HepG2 (cell line): ENCODE measurements at regions of chr13 and their contacts with region 1.

Region 1: GRCh38 chr13:98484289-98485219 is 92.4 kb downstream of the STK24 start:
- DNase-seq: peak; percentile 91
- ATAC-seq: peak; percentile 93
- H3K4me3 ChIP-seq: peak overlapping the region; percentile 23 to 66 (median 34); a peak in 5 of 6 replicates
- H3K27ac ChIP-seq: peak overlapping the region; percentile 88
- H3K4me1 ChIP-seq: peaks cover 92% of the 10 kb centered on the region
- H3K27me3 ChIP-seq: no peaks in the 10 kb centered on the region
- CTCF ChIP-seq: no peak
- EP300 ChIP-seq: peak in 1 of 2 experiments; percentile 24; a peak in 1 of 4 replicates
- POLR2A ChIP-seq: no peak
- RAD21 ChIP-seq: no peak

Region 2: GRCh38 chr13:98570929-98571372 is 86.4 kb after region 1 on chr13:
- CTCF ChIA-PET with region 1: interaction called, 3 read pairs
- POLR2A ChIA-PET with region 1: interaction called, 15 read pairs
- in situ Hi-C with region 1: no loop called
- intact Hi-C with region 1: loop called (anchors 2 kb)
- DNase-seq: peak; percentile 77
- ATAC-seq: peak; percentile 75
- H3K4me3 ChIP-seq: peak overlapping the region; percentile 11 to 59 (median 39)
- H3K27ac ChIP-seq: peak overlapping the region; percentile 74
- H3K4me1 ChIP-seq: peaks cover 90% of the 10 kb centered on the region
- H3K27me3 ChIP-seq: no peaks in the 10 kb centered on the region; a peak in 1 of 5 replicates
- CTCF ChIP-seq: no peak
- EP300 ChIP-seq: no peak
- POLR2A ChIP-seq: peak in 1 of 2 experiments; percentile 30; a peak in 1 of 4 replicates
- RAD21 ChIP-seq: no peak

Region 3: DNA sequence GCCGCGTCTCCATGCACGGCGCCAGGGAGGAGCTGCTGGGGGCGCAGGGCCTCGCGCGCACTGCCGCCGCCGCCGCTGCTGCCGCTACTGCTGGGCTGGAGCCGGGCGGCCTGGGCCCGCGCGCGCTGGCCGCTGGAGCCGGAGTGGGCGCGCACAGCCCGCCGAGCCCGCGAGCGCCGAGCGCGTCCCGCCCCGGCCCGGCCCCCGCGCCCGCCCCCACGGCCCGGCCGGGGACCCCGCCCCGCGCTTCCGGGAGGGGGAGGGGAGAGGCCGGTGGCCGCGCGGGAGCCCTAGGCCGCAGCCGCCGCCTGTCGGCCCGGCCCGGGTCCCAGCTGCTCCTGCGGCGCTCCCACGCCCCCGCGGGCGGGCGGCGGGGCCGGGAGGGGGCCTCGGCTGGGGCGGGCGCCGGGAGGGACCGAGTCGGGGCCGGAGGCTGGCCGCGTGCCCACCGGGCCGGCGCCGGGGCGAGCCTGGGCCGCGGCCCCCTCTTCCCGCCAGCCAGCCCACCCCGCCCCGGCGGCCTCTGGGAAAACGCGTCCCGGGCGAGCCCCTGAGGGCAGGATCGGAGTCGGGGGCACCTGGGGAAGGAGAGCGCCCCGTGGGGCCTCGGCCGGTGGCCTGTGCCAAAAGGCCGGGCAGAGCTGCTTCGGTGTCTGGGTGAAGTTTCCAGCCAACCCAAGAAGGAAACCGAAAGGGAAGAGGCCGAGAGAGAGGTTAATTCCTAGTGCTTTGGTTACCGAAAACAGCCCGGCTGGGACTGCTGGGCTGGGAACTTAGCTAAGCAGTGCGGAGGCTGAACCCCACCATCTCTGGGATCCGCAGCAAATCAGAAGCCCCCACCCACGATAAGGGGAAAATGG is 92.6 kb after region 1 on chr13 and contains the start of gene STK24:
- CTCF ChIA-PET with region 1: interaction called, 3 read pairs
- POLR2A ChIA-PET with region 1: interaction called, 15 read pairs
- in situ Hi-C with region 1: no loop called
- intact Hi-C with region 1: no loop called
- DNase-seq: peak; percentile 34
- ATAC-seq: peak; percentile 63
- H3K4me3 ChIP-seq: peak within 1 kb of the TSS; percentile 89 to 96 (median 95)
- H3K27ac ChIP-seq: peak within 1 kb of the TSS; percentile 96
- H3K4me1 ChIP-seq: peaks cover 46% of the 10 kb centered on the region
- H3K27me3 ChIP-seq: no peaks in the 10 kb centered on the region; a peak in 1 of 5 replicates
- CTCF ChIP-seq: no peak
- EP300 ChIP-seq: no peak
- POLR2A ChIP-seq: peak in 1 of 2 experiments; percentile 84; a peak in 3 of 4 replicates
- RAD21 ChIP-seq: peak; percentile 10; the same call in 1 of the 2 replicates
- total RNA-seq, gene STK24: 73.0 and 78.3 TPM in 2 replicates